Panc1 (cell line): ENCODE measurements at regions of chr4 and their contacts with region 1.

Region 1: GRCh38 chr4:5066101-5066500 is 14.8 kb downstream of the STK32B start:
- DNase-seq: no peak
- ATAC-seq: no peak
- H3K4me3 ChIP-seq: no peak overlapping the region
- H3K27ac ChIP-seq: no peak overlapping the region
- H3K4me1 ChIP-seq: no peaks in the 10 kb centered on the region
- H3K27me3 ChIP-seq: no peaks in the 10 kb centered on the region
- CTCF ChIP-seq: no peak

Region 2: GRCh38 chr4:5165420-5166369 is 99.6 kb after region 1 on chr4:
- CTCF ChIA-PET with region 1: no interaction called
- POLR2A ChIA-PET with region 1: interaction called, 13 read pairs
- in situ Hi-C with region 1: no loop called
- intact Hi-C with region 1: no loop called
- DNase-seq: no peak
- ATAC-seq: no peak
- H3K4me3 ChIP-seq: no peak overlapping the region
- H3K27ac ChIP-seq: no peak overlapping the region
- H3K4me1 ChIP-seq: no peaks in the 10 kb centered on the region
- H3K27me3 ChIP-seq: no peaks in the 10 kb centered on the region
- CTCF ChIP-seq: no peak